ENCODE measurements at regions of chrX and their contacts with region 1.

Region 1: GRCh38 chrX:130136497-130136896 is 26.2 kb upstream of the ELF4 start:
- DNase-seq: no peak
- ATAC-seq: no peak
- H3K4me3 ChIP-seq: no peak overlapping the region
- H3K4me3 Mint-ChIP-seq: no peak overlapping the region
- H3K27ac ChIP-seq: no peak overlapping the region
- H3K27ac Mint-ChIP-seq: no peak overlapping the region
- H3K4me1 ChIP-seq: no peaks in the 10 kb centered on the region
- H3K4me1 Mint-ChIP-seq: no peaks in the 10 kb centered on the region
- H3K27me3 ChIP-seq: no peaks in the 10 kb centered on the region
- H3K27me3 Mint-ChIP-seq: peaks cover 0 to 4% of the 10 kb centered on the region in 2 donors

Region 2: DNA sequence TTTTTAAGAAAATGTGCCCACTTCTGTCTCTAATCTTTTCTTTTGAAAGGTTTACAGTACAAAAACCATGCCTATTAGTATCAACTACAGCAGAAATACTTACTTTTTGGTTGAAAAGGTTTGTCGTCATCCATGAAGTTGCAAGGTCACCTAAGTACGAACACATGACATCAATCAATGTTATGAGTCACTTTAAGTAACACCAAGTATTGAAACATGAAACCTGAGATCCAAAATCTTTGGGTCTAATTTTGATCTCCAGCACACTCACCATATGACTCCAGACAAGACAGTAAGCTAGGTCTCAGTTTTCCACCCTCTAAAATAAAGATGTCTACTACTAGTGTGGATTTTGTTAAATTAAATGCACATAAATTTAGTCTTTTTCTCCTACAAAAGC is 123.8 kb after region 1 on chrX:
- CTCF ChIA-PET with region 1: no interaction called
- POLR2A ChIA-PET with region 1: interaction called in 1 of 2 experiments, 13 read pairs
- DNase-seq: no peak
- ATAC-seq: no peak
- H3K4me3 ChIP-seq: no peak overlapping the region
- H3K4me3 Mint-ChIP-seq: no peak overlapping the region
- H3K27ac ChIP-seq: no peak overlapping the region
- H3K27ac Mint-ChIP-seq: no peak overlapping the region
- H3K4me1 ChIP-seq: no peaks in the 10 kb centered on the region
- H3K4me1 Mint-ChIP-seq: peaks cover 0 to under 1% (median 0%) of the 10 kb centered on the region in 3 donors
- H3K27me3 ChIP-seq: no peaks in the 10 kb centered on the region
- H3K27me3 Mint-ChIP-seq: no peaks in the 10 kb centered on the region